H1 (cell line): ENCODE measurements at regions of chr13 and their contacts with region 1.

Region 1: DNA sequence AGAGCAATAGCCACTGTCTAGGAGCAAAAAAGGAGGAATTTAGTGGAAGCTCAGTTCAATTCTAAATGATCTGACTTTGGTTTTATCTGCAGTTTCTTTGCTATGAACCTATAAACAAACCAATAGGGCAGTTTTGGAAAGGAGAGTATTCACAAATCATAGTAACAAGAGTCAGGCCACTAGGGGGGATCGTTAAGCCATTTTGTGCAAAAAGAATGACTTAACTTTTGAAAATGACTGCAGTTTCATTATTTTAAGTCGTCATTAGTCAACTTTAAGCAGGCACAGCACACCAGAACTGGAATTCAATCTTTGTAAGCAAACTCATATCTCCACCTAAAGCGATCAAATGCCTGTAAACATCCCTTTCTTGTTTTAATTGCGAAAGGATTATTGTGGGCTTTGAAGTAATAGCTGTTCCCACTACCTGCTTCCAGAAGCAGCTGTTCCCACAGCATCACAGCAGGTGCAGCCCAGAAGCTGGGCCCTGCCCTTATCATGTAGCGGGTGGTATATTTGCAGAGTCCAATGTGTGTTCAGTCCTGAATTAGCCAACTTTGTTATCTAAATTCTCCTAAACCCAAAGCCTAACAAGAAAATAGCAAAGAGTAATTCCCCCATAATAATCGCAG is 51.5 kb downstream of the SOX21 start:
- DNase-seq: no peak
- H3K4me3 ChIP-seq: peak overlapping the region in 1 of 4 experiments; percentile 5; a peak in 1 of 8 replicates
- H3K27ac ChIP-seq: no peak overlapping the region
- H3K4me1 ChIP-seq: peaks cover 0 to 9% (median 6%) of the 10 kb centered on the region in 4 experiments; a peak in 4 of 7 replicates
- H3K27me3 ChIP-seq: no peaks in the 10 kb centered on the region
- CTCF ChIP-seq: peak in 2 of 3 experiments; percentile 8 to 50; a peak in 2 of 4 replicates
- EP300 ChIP-seq: no peak
- POLR2A ChIP-seq: no peak
- RAD21 ChIP-seq: peak; percentile 48 to 58

Region 2: GRCh38 chr13:94345374-94346195 is 315.2 kb before region 1 on chr13:
- CTCF ChIA-PET with region 1: no interaction called
- POLR2A ChIA-PET with region 1: no interaction called
- DNase-seq: no peak
- H3K4me3 ChIP-seq: no peak overlapping the region
- H3K27ac ChIP-seq: no peak overlapping the region
- H3K4me1 ChIP-seq: peaks cover 3 to 16% (median 5%) of the 10 kb centered on the region in 4 experiments; a peak in 5 of 7 replicates
- H3K27me3 ChIP-seq: no peaks in the 10 kb centered on the region; a peak in 1 of 7 replicates
- CTCF ChIP-seq: 0 out of 4 replicates have a peak, but pooled peaks of 1 of the 3 experiments have one; percentile 6
- EP300 ChIP-seq: no peak
- POLR2A ChIP-seq: no peak
- RAD21 ChIP-seq: peak; percentile 41 to 52

Region 3: DNA sequence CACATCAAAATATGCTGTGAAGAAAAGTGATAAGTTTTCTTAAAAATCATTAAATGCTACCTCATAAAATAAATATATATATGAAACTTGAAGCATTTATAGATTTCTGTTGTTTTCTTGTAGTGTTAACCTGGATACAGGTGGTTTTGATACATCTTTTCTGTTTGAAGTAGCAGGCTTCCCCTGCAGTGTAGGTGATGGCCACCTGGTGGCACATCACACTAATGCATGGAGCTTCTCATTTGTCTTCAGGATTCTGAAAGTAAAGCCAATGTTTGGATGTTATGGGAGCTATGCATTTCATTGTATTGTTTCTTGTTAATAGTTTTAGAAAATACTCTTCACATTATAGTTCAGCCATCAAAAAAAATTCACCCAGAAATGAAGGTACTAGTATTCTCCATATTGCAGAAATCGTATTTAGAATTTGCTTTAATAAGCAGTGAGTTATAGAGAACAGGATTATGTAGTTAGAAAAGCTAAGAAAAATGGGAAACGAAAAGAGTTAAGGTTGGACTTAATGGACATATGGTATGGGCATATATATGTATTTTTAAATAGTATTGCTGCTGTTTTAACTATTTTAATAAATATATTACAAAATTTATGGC is 40.4 kb before region 1 on chr13:
- CTCF ChIA-PET with region 1: interaction called, 27 read pairs
- POLR2A ChIA-PET with region 1: no interaction called
- DNase-seq: no peak
- H3K4me3 ChIP-seq: no peak overlapping the region
- H3K27ac ChIP-seq: no peak overlapping the region
- H3K4me1 ChIP-seq: no peaks in the 10 kb centered on the region
- H3K27me3 ChIP-seq: no peaks in the 10 kb centered on the region
- CTCF ChIP-seq: peak; percentile 38 to 80 (median 64)
- EP300 ChIP-seq: no peak
- POLR2A ChIP-seq: no peak
- RAD21 ChIP-seq: peak; percentile 85 to 86

Region 4: GRCh38 chr13:94674609-94675348 is 14.0 kb after region 1 on chr13:
- CTCF ChIA-PET with region 1: interaction called, 23 read pairs
- POLR2A ChIA-PET with region 1: no interaction called
- DNase-seq: peak in 1 of 2 experiments; percentile 85
- H3K4me3 ChIP-seq: no peak overlapping the region
- H3K27ac ChIP-seq: no peak overlapping the region
- H3K4me1 ChIP-seq: peaks cover 0 to 3% (median 0%) of the 10 kb centered on the region in 4 experiments; a peak in 3 of 7 replicates
- H3K27me3 ChIP-seq: no peaks in the 10 kb centered on the region
- CTCF ChIP-seq: peak; percentile 57 to 78 (median 73)
- EP300 ChIP-seq: no peak
- POLR2A ChIP-seq: no peak
- RAD21 ChIP-seq: peak; percentile 85 to 87

Region 5: GRCh38 chr13:94696171-94696570 is 35.4 kb after region 1 on chr13:
- CTCF ChIA-PET with region 1: interaction called, 11 read pairs
- POLR2A ChIA-PET with region 1: no interaction called
- DNase-seq: no peak
- H3K4me3 ChIP-seq: no peak overlapping the region; a peak in 1 of 8 replicates
- H3K27ac ChIP-seq: no peak overlapping the region
- H3K4me1 ChIP-seq: peaks cover 0 to 4% (median 0%) of the 10 kb centered on the region in 4 experiments; a peak in 2 of 7 replicates
- H3K27me3 ChIP-seq: peaks cover 13 to 24% (median 18%) of the 10 kb centered on the region in 4 experiments
- CTCF ChIP-seq: no peak
- EP300 ChIP-seq: no peak
- POLR2A ChIP-seq: no peak
- RAD21 ChIP-seq: no peak

Region 6: DNA sequence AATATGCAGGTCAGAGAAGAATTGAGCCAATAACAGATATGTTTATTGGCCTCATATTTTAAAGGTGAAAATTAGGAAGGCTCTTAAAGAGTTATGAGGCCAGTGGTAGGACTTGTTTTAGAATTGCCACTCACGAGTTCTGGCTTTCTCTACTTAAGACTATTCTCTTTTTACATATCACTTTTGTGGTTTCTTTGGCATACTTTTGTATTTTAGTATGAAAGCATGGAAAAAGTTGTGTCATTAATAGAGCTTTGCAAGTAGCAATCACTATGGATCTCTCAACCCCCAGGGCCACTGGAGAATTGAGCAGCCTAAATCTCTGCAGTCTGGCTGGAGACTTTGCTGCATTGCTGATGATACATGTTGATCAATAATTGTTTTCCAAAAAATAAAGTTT is 116.1 kb after region 1 on chr13:
- CTCF ChIA-PET with region 1: no interaction called
- POLR2A ChIA-PET with region 1: no interaction called
- DNase-seq: no peak
- H3K4me3 ChIP-seq: no peak overlapping the region
- H3K27ac ChIP-seq: no peak overlapping the region
- H3K4me1 ChIP-seq: no peaks in the 10 kb centered on the region
- H3K27me3 ChIP-seq: no peaks in the 10 kb centered on the region; a peak in 1 of 7 replicates
- CTCF ChIP-seq: no peak
- EP300 ChIP-seq: no peak
- POLR2A ChIP-seq: no peak
- RAD21 ChIP-seq: no peak

Region 7: GRCh38 chr13:94988654-94989053 is 327.8 kb after region 1 on chr13:
- CTCF ChIA-PET with region 1: interaction called, 12 read pairs
- POLR2A ChIA-PET with region 1: no interaction called
- DNase-seq: no peak
- H3K4me3 ChIP-seq: no peak overlapping the region
- H3K27ac ChIP-seq: no peak overlapping the region
- H3K4me1 ChIP-seq: peaks cover 1 to 8% (median 4%) of the 10 kb centered on the region in 4 experiments; a peak in 2 of 7 replicates
- H3K27me3 ChIP-seq: no peaks in the 10 kb centered on the region
- CTCF ChIP-seq: peak in 2 of 3 experiments; percentile 37 to 48; a peak in 2 of 4 replicates
- EP300 ChIP-seq: no peak
- POLR2A ChIP-seq: no peak
- RAD21 ChIP-seq: peak; percentile 42 to 52; a peak in 3 of 4 replicates